ENCODE measurements at regions of chr5 and their contacts with region 1.

Region 1: DNA sequence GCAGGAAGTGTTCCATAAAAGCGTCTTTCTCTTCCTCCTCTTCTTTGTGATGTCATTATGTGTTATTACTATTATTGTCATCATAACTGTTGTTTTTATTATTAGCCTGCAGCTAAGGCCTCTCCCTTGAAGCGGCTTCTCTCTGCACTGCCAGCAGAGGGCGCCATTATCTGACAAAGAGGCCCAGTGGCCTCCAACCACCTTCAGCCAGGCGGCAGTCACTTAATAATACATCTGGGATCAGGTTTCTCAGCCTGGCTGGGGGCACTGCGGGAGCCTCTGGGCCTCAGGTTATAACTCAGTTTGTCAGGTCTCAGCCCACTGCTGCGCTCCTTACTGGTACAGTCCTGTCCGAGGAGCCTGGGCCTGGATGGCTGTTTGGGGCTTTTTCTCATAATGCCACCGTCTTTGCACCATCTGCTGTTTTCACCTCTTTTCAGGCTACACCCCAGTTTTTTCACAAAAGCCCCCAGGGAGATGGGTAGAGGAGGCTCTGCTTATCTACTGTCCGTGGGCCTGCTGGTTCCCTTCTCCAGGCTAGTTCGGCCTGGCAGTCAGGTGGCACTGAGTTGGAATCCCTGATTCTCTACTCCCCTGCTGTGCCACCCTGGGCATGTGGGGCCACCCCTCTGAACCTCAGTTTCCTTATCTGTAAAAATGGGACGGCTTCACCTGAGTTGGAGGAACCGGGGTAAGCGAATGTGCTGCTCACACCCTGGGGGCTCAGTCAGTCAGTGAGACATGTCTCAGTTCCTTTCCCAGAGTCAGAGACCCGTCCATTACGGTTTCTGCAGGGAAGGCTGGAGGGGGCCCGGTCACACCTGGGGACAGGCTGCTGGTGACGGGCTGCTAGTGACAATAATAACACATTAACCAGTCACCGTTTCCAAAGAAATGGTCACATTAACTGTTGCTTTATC is 282.1 kb downstream of the NSG2 start:
- DNase-seq: peak; percentile 74
- H3K4me3 ChIP-seq: no peak overlapping the region
- H3K27ac ChIP-seq: no peak overlapping the region
- H3K4me1 ChIP-seq: no peaks in the 10 kb centered on the region
- H3K27me3 ChIP-seq: peaks cover 4% of the 10 kb centered on the region
- CTCF ChIP-seq: peak; percentile 76

Region 2: DNA sequence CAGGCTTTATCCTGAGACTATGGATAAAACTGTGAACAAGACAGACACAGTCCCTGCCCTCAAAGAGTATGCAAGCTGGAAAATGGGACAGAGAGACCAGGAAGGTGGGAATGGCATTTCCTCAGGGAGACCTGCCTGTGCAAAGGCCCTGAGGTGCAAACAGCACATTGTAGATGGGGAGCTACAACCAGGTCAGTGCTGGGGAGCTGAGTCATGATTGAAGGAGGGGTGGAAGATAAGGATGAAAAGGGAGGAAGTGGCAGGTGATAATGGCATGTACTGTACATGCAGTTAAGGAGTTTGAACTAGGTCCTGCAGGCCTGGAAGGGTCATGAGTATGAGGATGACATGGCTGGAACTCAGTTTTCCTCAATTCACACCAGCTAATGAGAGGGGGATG is 635.6 kb before region 1 on chr5:
- CTCF ChIA-PET with region 1: interaction called, 12 read pairs
- POLR2A ChIA-PET with region 1: no interaction called
- intact Hi-C with region 1: no loop called
- DNase-seq: no peak
- H3K4me3 ChIP-seq: no peak overlapping the region
- H3K27ac ChIP-seq: no peak overlapping the region
- H3K4me1 ChIP-seq: no peaks in the 10 kb centered on the region
- H3K27me3 ChIP-seq: no peaks in the 10 kb centered on the region
- CTCF ChIP-seq: no peak

Region 3: GRCh38 chr5:174735498-174736330 is 408.1 kb after region 1 on chr5:
- CTCF ChIA-PET with region 1: no interaction called
- POLR2A ChIA-PET with region 1: no interaction called
- intact Hi-C with region 1: loop called (anchors 5 kb)
- DNase-seq: no peak
- H3K4me3 ChIP-seq: no peak overlapping the region
- H3K27ac ChIP-seq: no peak overlapping the region
- H3K4me1 ChIP-seq: no peaks in the 10 kb centered on the region
- H3K27me3 ChIP-seq: peaks cover 67% of the 10 kb centered on the region
- CTCF ChIP-seq: peak; percentile 52

Region 4: DNA sequence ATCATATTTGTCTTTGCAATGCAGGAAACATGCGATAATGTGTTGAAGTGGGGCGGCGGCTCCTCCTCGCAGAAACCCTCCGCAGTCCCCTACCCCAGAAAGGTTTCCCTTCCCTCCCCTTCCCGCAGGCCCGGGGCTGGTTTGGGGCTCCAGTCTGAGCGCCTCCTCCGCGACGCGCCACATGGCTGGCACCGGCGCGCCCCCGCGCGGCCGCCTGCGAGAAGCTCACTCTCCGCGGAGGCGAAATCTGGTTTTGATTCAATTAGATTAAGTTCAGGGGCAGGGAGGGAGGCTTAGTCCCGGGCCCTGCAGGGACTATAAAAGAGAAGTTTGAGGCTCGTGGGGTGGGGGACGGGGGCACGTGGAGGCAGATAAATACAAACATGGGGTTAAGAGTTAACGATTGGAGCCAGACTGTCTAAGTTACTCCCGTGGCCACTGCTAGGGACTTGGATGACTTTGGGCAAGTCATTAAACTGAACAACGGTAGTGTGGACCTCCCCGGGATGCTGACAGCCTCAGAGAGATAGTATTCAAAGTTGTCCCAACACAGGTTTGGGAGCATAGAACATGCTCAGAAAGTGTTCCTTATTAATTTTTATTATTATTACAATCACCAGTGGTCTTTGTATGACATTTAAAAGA is 466.2 kb after region 1 on chr5:
- CTCF ChIA-PET with region 1: no interaction called
- POLR2A ChIA-PET with region 1: no interaction called
- intact Hi-C with region 1: loop called (anchors 5 kb)
- DNase-seq: peak; percentile 73
- H3K4me3 ChIP-seq: no peak overlapping the region
- H3K27ac ChIP-seq: no peak overlapping the region
- H3K4me1 ChIP-seq: no peaks in the 10 kb centered on the region
- H3K27me3 ChIP-seq: peaks cover 21% of the 10 kb centered on the region
- CTCF ChIP-seq: peak; percentile 92

Region 5: DNA sequence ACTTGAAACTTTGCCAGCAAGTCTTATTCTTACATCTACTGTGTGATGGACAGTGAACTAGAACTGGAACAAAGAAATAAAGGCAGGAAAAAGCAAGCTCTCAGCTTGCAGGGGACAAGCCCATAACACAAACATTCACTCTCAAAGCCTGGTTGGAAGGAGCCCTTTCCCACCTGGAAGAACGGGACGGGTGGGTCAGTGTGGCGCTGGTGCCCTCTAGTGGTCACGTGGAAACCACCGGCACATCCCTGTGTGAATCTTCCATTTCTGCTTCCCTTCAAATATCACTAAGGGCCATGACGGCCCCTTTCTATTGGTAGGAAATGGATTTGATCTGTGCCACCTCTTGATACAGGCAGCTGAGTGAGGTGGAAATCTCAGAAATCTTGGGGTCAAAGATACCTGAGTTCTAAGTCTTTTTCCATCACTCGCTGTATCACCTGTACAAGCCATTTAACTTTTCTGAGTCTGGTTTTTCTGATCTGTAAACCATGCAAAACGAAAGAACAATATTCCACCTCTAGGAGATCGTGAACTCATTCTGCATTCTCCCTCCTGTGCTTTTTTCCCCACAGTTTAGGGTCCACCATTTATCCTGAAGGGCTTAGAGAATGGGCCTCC is 608.4 kb after region 1 on chr5:
- CTCF ChIA-PET with region 1: no interaction called
- POLR2A ChIA-PET with region 1: no interaction called
- intact Hi-C with region 1: loop called (anchors 2 kb)
- DNase-seq: peak; percentile 53
- H3K4me3 ChIP-seq: no peak overlapping the region
- H3K27ac ChIP-seq: no peak overlapping the region
- H3K4me1 ChIP-seq: no peaks in the 10 kb centered on the region
- H3K27me3 ChIP-seq: peaks cover 3% of the 10 kb centered on the region
- CTCF ChIP-seq: peak; percentile 81

Measured in A673 (cell line).